Right ventricle myocardium superior (tissue), 1 donor: ENCODE measurements at regions of chr9 and their contacts with region 1.

Region 1: DNA sequence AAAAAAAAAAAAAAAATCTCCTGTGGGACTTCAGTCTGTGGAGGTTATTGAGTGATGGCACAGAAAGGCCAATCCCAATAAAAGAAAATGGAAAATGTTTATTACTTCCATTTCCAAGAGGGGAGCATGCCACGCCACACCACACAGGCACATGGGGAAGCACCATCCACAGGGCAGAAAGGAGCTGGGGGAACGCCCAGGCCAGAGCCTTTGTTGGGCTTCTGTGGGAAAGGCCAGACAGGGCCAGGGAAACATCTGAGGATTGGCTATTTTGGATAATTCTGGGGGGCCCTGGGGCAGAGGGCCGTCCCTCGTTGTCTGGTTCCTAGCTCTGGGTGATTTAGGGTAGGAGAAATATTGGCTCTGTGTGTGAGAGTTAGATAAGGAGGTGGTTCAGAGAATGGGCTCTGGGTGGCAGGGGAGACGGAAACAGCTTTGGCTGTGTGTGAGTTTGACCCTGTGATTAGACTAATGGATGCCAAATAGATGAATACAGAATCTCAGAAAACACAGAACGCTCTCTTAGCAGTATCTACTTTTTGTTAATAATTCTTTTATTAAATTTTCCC is 49.0 kb upstream of the ABL1 start:
- DNase-seq: no peak
- ATAC-seq: peak; percentile 16

Region 2: DNA sequence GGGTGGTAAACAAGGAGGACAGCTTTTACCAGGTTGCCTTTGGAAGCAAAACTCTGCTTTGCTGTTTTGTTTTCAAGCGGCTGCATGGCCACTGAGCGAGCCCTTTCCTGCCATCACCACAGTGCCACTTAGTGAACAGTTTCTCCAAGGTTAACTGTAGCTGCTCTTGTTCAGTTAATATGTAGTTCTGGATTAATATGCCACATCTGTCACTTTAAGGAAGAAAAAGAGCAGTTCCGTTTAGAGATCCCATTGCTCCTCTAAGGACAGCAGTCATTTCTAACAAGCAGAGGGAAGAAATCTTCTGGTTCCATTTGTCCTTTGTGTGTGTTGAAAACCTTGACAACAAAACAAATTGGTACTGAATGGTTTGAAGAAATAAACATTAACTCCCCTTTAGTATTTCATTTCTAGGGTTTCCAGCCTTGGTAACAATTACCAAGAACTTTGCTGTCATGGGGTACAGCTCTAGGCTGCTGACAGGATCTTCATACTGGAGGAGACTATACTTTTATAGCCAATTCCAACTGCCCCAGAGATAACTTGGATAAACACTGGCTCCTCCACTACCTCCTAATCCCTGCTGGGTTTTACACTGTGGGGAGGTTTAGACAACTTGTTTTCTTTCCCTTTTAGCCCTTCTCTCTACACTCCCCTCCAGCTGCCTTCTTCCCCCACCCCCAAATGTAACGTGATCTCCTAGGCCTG is 38.8 kb after region 1 on chr9:
- intact Hi-C with region 1: loop called (anchors 5 kb)
- DNase-seq: no peak
- ATAC-seq: peak; percentile 89

Region 3: GRCh38 chr9:131082774-131083512 is 296.9 kb after region 1 on chr9:
- intact Hi-C with region 1: no loop called
- DNase-seq: no peak
- ATAC-seq: no peak